Activated CD8-positive, alpha-beta T cell treated with anti-CD3 and anti-CD28 coated beads, Interleukin-2, amount 10 ng/mL, durations not matched to agents 7 days and 5 days (primary cell): ENCODE measurements at regions of chr12 and their contacts with region 1.

Region 1: DNA sequence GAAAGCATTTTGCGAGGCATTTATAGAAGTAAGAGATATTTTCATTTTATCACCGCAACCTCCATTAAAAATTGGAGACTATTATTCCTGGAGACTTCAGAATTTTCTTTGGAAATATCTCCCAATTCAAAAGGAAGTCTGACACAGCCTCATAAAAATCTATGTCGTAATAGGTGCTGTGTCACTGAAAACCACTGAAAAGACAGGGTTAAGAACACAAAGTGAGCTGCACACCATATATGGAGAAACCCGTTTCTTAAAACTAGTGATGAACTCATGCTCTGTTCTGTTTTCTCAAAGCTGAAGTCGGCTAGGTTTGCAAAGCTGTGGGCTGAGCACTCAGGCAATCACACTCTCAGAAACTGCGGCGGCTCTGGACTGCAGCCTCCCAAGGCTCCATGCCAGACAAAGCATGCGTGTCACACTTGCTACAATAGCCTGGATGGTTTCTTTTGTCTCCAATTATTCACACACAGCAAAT is at the start of gene GLIPR1:
- DNase-seq: peak; percentile 83
- ATAC-seq: peak; percentile 83
- H3K4me3 Mint-ChIP-seq: peak within 1 kb of the TSS; percentile 91
- H3K27ac Mint-ChIP-seq: peak within 1 kb of the TSS; percentile 100
- H3K4me1 Mint-ChIP-seq: peaks cover 71% of the 10 kb centered on the region
- H3K27me3 Mint-ChIP-seq: no peaks in the 10 kb centered on the region
- total RNA-seq, gene GLIPR1: 30.5 to 33.0 TPM

Region 2: GRCh38 chr12:75390899-75391538 is 89.5 kb before region 1 on chr12 and contains the start of gene GLIPR1L2:
- CTCF ChIA-PET with region 1: interaction called, 62 read pairs
- POLR2A ChIA-PET with region 1: interaction called, 9 read pairs
- DNase-seq: peak; percentile 92
- ATAC-seq: peak; percentile 98
- H3K4me3 Mint-ChIP-seq: peak within 1 kb of the TSS; percentile 82
- H3K27ac Mint-ChIP-seq: peak within 1 kb of the TSS; percentile 90
- H3K4me1 Mint-ChIP-seq: peaks cover 35% of the 10 kb centered on the region
- H3K27me3 Mint-ChIP-seq: no peaks in the 10 kb centered on the region
- total RNA-seq, gene GLIPR1L2: not detected

Region 3: DNA sequence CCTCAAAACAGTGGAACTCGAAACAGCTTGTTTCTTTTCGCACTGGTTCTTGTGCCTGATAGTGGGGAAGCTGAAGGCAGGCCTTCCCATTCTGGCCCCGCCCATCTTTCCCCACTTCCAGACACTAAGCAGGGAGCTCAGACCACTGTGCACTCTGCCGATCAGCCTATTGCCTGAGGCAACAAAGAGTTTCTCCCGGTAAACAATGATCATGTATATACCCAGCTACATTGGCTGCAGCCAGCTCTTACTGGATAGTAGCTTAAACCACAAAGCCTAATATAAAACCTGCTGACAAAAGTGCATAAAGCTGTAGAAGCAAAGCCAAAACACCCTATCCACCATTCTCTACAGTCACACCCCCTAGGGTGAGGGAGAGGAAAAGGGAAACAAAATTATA is 24.7 kb before region 1 on chr12:
- CTCF ChIA-PET with region 1: interaction called, 24 read pairs
- POLR2A ChIA-PET with region 1: interaction called, 6 read pairs
- DNase-seq: no peak
- ATAC-seq: no peak
- H3K4me3 Mint-ChIP-seq: no peak overlapping the region
- H3K27ac Mint-ChIP-seq: no peak overlapping the region
- H3K4me1 Mint-ChIP-seq: peaks cover 43% of the 10 kb centered on the region
- H3K27me3 Mint-ChIP-seq: no peaks in the 10 kb centered on the region

Region 4: GRCh38 chr12:75511116-75512048 is 30.9 kb after region 1 on chr12 and contains the start of gene KRR1:
- CTCF ChIA-PET with region 1: interaction called, 62 read pairs
- POLR2A ChIA-PET with region 1: interaction called, 24 read pairs
- DNase-seq: peak; percentile 96
- ATAC-seq: peak; percentile 97
- H3K4me3 Mint-ChIP-seq: peak within 1 kb of the TSS; percentile 97
- H3K27ac Mint-ChIP-seq: peak within 1 kb of the TSS; percentile 99
- H3K4me1 Mint-ChIP-seq: peaks cover 32% of the 10 kb centered on the region
- H3K27me3 Mint-ChIP-seq: no peaks in the 10 kb centered on the region
- total RNA-seq, gene KRR1: 71.0 to 73.1 TPM